Stomach (tissue), 19 donors: ENCODE measurements at regions of chr18 and their contacts with region 1.

Region 1: DNA sequence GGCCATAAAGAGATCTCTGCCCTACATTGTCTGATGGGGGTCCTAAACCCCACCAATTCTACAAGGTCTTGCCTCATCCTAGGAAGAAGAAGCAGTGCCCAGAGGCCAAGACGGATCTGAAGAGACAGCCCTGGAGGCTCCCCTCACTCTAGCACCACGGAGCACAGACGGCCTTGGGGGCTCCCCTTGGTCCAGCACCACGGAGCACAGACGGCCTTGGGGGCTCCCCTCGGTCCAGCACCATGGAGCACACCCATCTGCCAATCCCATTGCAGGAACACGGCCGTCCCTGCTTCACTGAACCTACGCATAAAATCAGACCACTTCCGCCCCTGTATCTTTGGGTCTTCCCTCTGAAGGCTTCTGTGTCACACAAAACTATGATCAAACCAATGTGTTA is 215.1 kb upstream of the SALL3 start:
- DNase-seq: no peak
- H3K4me3 ChIP-seq: no peak overlapping the region
- H3K27ac ChIP-seq: no peak overlapping the region
- H3K4me1 ChIP-seq: peaks cover 3 to 17% (median 11%) of the 10 kb centered on the region in 4 donors
- H3K27me3 ChIP-seq: peaks cover 0 to 53% (median 8%) of the 10 kb centered on the region in 3 donors
- CTCF ChIP-seq: no peak
- EP300 ChIP-seq: no peak
- POLR2A ChIP-seq: no peak

Region 2: DNA sequence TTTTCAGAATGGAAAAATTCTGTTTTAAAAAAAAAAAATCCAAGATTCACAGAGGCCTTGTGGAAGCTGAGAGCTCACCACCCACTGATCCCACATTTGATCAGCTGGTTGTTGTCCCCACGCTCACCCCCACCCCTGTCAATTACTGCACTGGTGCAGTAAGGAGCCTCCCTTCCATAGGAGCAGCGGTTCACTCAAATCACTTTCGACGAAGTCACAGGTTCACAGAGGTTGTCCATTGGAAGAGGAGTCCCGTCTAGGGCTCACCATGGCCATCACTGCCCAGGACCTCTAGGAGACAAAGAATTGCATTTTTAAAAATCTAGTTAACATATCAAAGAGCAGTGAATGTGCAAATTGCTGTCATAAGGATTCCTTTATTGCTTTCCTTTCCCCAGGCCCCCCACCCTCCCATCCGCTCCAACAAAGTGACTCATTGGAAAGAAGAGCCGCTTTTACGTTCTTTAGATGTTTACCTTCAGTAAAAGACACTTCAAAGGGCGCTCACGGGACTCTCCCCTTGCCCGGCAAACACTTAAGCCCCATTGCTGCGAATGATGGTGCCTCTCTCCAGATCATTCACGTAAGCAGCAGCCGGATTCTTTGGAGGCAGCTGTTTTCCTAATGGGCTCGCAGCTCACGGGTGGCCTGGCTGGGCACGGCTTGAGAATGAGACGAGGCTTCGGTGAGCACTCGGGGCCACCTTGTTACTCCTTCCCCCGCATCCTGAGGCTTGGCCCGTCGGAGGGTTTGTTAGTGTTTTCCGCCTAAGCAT is 49.6 kb after region 1 on chr18:
- intact Hi-C with region 1: loop called (anchors 5 kb)
- DNase-seq: peak in 1 of 2 donors; percentile 9
- H3K4me3 ChIP-seq: no peak overlapping the region
- H3K27ac ChIP-seq: no peak overlapping the region
- H3K4me1 ChIP-seq: no peaks in the 10 kb centered on the region
- H3K27me3 ChIP-seq: peaks cover 6 to 69% (median 16%) of the 10 kb centered on the region in 3 donors
- CTCF ChIP-seq: no peak
- EP300 ChIP-seq: no peak
- POLR2A ChIP-seq: no peak